Dorsolateral prefrontal cortex (tissue), 120 donors: ENCODE measurements at regions of chr15 and their contacts with region 1.

Region 1: GRCh38 chr15:94532226-94532625 is 300.9 kb downstream of the MCTP2 start:
- DNase-seq: no peak
- H3K4me3 ChIP-seq: no peak overlapping the region
- H3K27ac ChIP-seq: no peak overlapping the region
- H3K27me3 ChIP-seq: peaks cover 0 to 22% (median 0%) of the 10 kb centered on the region in 45 donors
- CTCF ChIP-seq: no peak

Region 2: DNA sequence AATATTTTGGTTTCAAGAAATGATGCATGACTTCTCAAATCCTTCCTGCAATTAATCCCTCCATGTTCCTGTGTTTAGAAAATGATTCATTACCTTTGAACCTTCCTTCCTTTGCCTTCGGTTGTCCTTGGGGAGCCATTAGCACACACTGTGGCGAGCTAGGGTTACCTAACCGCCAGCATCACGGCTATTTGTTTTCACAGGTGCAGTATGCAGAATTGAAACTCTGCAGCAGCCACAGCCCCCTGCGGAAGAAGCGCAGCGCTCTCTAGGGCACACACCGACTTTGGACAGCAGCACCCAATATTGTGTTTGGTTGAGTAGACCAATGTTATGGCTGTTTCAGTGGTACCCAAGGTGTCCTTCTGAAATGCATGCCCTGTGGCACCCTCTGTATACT is 53.5 kb before region 1 on chr15:
- intact Hi-C with region 1: loop called in 1 of 2 experiments (anchors 10 kb)
- DNase-seq: no peak
- H3K4me3 ChIP-seq: no peak overlapping the region
- H3K27ac ChIP-seq: no peak overlapping the region
- H3K27me3 ChIP-seq: peaks cover 0 to 71% (median 28%) of the 10 kb centered on the region in 45 donors
- CTCF ChIP-seq: no peak